Activated T-helper 1 cell treated with anti-CD3 and anti-CD28 coated beads, Interleukin-12 subunit alpha, Interleukin-12 subunit beta, Interleukin-2, Interleukin-4 antibody, amounts not matched to agents 30 ng/mL and 10 ng/mL and 1 ng/mL, durations not matched to agents 14 hours and 24 hours and 36 hours (primary cell): ENCODE measurements at regions of chr14 and their contacts with region 1.

Region 1: GRCh38 chr14:45201905-45202304 is 51.1 kb downstream of the MIS18BP1 start:
- DNase-seq: peak; percentile 9
- H3K4me3 Mint-ChIP-seq: no peak overlapping the region
- H3K27ac Mint-ChIP-seq: no peak overlapping the region
- H3K4me1 Mint-ChIP-seq: peaks cover 11% of the 10 kb centered on the region
- H3K27me3 Mint-ChIP-seq: no peaks in the 10 kb centered on the region

Region 2: GRCh38 chr14:45156060-45156459 is 45.8 kb before region 1 on chr14:
- intact Hi-C with region 1: loop called (anchors 5 kb)
- DNase-seq: no peak
- H3K4me3 Mint-ChIP-seq: no peak overlapping the region
- H3K27ac Mint-ChIP-seq: no peak overlapping the region
- H3K4me1 Mint-ChIP-seq: peaks cover 8% of the 10 kb centered on the region
- H3K27me3 Mint-ChIP-seq: no peaks in the 10 kb centered on the region